A549 (cell line): ENCODE measurements at regions of chr15 and their contacts with region 1.

Region 1: GRCh38 chr15:68672781-68673205 is 94.0 kb downstream of the CORO2B start:
- DNase-seq: peak in 1 of 2 experiments; percentile 29
- ATAC-seq: peak; percentile 45 to 60; a peak in 3 of 6 replicates
- H3K4me3 ChIP-seq: no peak overlapping the region
- H3K27ac ChIP-seq: no peak overlapping the region
- H3K4me1 ChIP-seq: no peaks in the 10 kb centered on the region
- CTCF ChIP-seq: peak; percentile 28; the same call in 2 of the 3 replicates
- EP300 ChIP-seq: no peak
- POLR2A ChIP-seq: no peak
- RAD21 ChIP-seq: peak; percentile 27 to 53; a peak in 2 of 5 replicates

Region 2: DNA sequence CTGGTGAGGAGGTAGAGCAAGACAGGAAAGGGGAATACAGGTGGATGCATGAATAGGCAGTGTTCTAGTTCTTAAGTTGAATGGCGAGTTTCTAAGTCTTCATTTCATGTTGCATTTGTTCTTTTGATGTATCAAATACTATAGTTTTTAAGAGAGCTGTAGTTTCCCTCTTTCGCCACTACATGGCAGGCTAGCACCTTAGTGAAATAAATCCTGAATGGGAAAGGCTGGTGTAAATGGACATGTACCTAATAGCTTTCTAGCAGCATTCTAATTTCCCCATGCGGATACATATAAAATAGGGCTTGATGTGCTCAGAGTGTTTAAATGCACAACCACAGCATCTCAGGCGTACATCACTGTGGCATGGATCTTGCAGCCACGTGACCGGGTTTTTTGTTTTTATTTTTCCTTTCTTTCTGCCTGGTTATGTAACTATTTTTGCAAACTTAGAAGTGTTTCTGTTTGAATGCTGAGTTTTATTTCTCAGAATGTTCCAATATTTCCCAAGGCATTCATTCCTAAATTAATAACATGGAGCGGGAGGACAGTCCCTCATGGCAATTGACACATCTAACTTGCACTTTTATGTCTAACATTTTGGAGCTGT is 419.8 kb before region 1 on chr15:
- CTCF ChIA-PET with region 1: interaction called, 52 read pairs
- POLR2A ChIA-PET with region 1: no interaction called
- DNase-seq: peak; percentile 82 to 88
- ATAC-seq: peak; percentile 69 to 74
- H3K4me3 ChIP-seq: no peak overlapping the region
- H3K27ac ChIP-seq: no peak overlapping the region
- H3K4me1 ChIP-seq: peaks cover 12% of the 10 kb centered on the region; the same call in 2 of the 3 replicates
- CTCF ChIP-seq: peak; percentile 96
- EP300 ChIP-seq: no peak
- POLR2A ChIP-seq: no peak
- RAD21 ChIP-seq: peak; percentile 95 to 97

Region 3: DNA sequence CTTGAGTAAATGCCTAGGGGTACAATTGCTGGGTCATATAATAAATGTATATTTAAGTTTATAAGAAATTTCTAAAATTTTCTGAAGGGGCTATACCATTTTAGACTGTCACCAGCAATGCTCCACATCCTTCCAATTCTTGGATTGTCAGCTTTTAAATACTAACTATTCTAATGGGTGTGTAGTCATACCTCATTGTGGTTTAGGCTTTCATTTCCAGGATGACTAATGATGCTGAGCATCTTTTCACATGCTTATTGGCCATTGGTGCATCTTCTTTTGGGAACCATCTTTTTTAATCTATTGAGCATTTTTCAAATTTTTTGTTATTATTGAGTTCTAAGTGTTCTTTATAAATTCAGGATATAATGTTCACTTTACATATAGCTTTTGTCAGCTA is 146.5 kb before region 1 on chr15:
- CTCF ChIA-PET with region 1: interaction called, 13 read pairs
- POLR2A ChIA-PET with region 1: no interaction called
- DNase-seq: no peak
- ATAC-seq: no peak
- H3K4me3 ChIP-seq: no peak overlapping the region
- H3K27ac ChIP-seq: no peak overlapping the region
- H3K4me1 ChIP-seq: peaks cover 15% of the 10 kb centered on the region; the same call in 2 of the 3 replicates
- CTCF ChIP-seq: no peak
- EP300 ChIP-seq: no peak
- POLR2A ChIP-seq: no peak
- RAD21 ChIP-seq: no peak

Region 4: DNA sequence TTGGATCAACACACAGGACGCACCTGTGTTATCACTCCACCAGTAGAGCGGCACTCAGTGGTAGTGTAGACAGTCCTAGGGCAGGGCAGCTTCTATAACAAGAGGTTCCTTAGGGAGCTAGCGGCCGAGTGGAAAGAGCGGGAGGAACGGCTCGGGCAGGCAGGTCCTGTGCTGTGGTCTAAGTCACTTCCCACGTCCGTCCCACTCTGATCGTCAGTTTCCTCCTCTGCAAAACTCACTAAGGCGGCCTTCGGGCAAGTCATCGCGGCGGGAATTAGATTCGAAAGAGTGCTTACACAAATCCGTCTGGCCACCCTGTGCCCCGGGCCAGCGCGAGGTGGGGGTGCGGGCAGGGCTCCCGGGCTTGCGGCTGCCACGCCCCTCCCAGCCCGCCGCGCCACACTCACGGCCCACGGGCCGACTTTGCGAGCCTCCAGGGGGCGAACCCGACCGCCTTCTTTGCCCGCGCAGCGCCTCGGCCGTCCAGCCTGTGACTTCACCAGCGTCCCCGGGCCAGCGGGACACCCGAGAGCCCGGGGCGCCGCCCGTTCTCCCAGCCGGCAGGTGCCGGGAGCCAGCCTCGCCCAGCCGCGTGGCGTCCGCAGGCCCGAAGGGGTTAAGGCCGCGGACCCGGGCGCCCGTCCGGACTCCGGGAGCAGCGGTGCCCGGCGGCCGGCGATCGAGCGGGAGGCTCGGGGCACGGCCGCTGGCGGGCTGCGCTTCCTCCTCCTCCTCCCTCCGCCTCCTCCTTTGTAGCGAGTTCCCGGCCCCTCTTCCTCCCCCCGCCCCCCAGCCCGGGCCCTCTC is 94.4 kb before region 1 on chr15:
- CTCF ChIA-PET with region 1: interaction called, 244 read pairs
- POLR2A ChIA-PET with region 1: no interaction called
- DNase-seq: peak in 1 of 2 experiments; percentile 47
- ATAC-seq: peak; percentile 54 to 71
- H3K4me3 ChIP-seq: peak overlapping the region; percentile 63
- H3K27ac ChIP-seq: peak overlapping the region; percentile 67 to 81
- H3K4me1 ChIP-seq: 0 out of 3 replicates have a peak, but pooled peaks cover 4% of the 10 kb centered on the region
- CTCF ChIP-seq: peak; percentile 35; the same call in 2 of the 3 replicates
- EP300 ChIP-seq: no peak
- POLR2A ChIP-seq: no peak; the same call in 1 of the 2 replicates
- RAD21 ChIP-seq: peak in 1 of 2 experiments; percentile 43; a peak in 3 of 5 replicates

Region 5: DNA sequence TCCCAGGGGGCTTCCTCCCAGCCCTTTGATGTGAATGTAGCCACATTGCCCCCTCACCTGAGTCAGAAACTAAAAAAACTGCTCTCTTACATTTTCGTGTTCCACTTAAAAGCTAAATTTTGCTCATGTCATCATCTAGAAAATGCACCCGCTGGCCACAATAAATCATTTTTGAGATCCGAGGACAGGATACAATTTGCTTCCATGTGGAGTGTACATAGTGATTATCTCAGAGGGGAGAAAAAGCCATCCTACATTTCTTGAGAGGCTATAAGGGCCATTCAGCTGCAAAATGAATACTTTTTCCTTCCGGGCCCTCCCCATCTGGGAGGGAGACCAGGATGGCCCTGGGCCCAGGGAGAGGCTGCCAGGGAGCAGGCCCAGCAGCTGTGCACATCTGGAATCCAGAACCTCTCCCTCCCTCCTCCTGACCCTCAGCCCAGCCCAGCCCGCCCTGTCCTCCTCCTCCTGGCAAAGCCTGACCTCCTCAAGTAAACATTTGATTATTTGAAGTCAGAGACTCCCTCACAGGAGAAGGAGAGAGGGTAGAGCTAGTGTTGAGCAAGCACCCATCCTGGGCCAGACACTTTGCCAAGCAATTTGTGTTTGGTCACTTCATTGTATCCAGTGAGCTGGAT is 34.9 kb before region 1 on chr15:
- CTCF ChIA-PET with region 1: interaction called, 11 read pairs
- POLR2A ChIA-PET with region 1: no interaction called
- DNase-seq: no peak
- ATAC-seq: no peak
- H3K4me3 ChIP-seq: no peak overlapping the region
- H3K27ac ChIP-seq: no peak overlapping the region
- H3K4me1 ChIP-seq: peaks cover 11% of the 10 kb centered on the region; the same call in 1 of the 3 replicates
- CTCF ChIP-seq: no peak
- EP300 ChIP-seq: no peak
- POLR2A ChIP-seq: no peak
- RAD21 ChIP-seq: no peak

Region 6: GRCh38 chr15:68658151-68658550 is 14.6 kb before region 1 on chr15:
- CTCF ChIA-PET with region 1: interaction called, 205 read pairs
- POLR2A ChIA-PET with region 1: no interaction called
- DNase-seq: no peak
- ATAC-seq: no peak; a peak in 1 of 6 replicates
- H3K4me3 ChIP-seq: no peak overlapping the region
- H3K27ac ChIP-seq: no peak overlapping the region
- H3K4me1 ChIP-seq: no peaks in the 10 kb centered on the region
- CTCF ChIP-seq: no peak
- EP300 ChIP-seq: no peak
- POLR2A ChIP-seq: no peak
- RAD21 ChIP-seq: no peak

Region 7: DNA sequence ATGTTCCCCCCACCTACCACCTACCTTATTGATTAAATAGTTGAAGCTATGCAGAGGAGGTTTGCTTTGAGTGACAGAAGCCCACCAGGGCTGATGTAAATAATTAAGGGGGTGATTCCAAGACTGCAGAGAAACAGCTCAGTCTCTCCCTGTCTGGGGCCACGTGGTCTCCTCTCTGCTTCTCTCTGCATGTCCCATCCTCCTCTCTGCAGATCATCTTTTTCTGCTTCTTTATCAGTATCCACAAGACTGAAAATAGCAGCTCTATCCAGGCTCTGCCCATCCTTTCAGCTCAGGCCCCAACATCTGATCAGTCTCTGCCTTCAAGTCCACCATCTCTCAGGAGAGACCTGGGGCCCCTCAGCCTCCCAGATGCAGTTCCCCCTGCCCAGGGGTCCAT is 37.1 kb after region 1 on chr15:
- CTCF ChIA-PET with region 1: interaction called, 16 read pairs
- POLR2A ChIA-PET with region 1: no interaction called
- DNase-seq: no peak
- ATAC-seq: no peak
- H3K4me3 ChIP-seq: no peak overlapping the region
- H3K27ac ChIP-seq: no peak overlapping the region
- H3K4me1 ChIP-seq: no peaks in the 10 kb centered on the region
- CTCF ChIP-seq: no peak
- EP300 ChIP-seq: no peak
- POLR2A ChIP-seq: no peak
- RAD21 ChIP-seq: no peak

Region 8: DNA sequence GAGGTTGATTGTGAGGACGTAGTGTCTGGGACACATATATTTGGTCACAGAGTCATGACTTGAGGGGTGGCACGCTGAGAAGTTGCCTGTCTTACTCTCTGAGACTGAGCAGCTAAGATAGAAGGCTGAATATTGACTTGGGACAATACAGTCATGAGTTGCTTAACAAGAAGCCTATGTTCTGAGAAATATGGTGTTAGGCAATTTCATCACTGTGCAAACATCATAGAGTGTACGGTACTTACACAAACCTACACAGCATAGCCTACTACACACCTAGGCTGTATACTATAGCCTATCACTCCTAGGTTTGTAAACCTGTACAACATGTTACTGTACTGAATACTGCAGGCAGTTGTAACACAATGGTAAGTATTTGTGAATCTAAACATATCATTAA is 227.2 kb after region 1 on chr15:
- CTCF ChIA-PET with region 1: no interaction called
- POLR2A ChIA-PET with region 1: no interaction called
- DNase-seq: no peak
- ATAC-seq: peak in 1 of 2 experiments; percentile 31; a peak in 1 of 6 replicates
- H3K4me3 ChIP-seq: no peak overlapping the region
- H3K27ac ChIP-seq: no peak overlapping the region
- H3K4me1 ChIP-seq: no peaks in the 10 kb centered on the region
- CTCF ChIP-seq: no peak
- EP300 ChIP-seq: no peak
- POLR2A ChIP-seq: no peak
- RAD21 ChIP-seq: no peak

Region 9: GRCh38 chr15:69652751-69653305 is 980.0 kb after region 1 on chr15:
- CTCF ChIA-PET with region 1: no interaction called
- POLR2A ChIA-PET with region 1: no interaction called
- DNase-seq: no peak
- ATAC-seq: no peak
- H3K4me3 ChIP-seq: no peak overlapping the region
- H3K27ac ChIP-seq: no peak overlapping the region
- H3K4me1 ChIP-seq: no peaks in the 10 kb centered on the region
- CTCF ChIP-seq: no peak
- EP300 ChIP-seq: no peak
- POLR2A ChIP-seq: no peak
- RAD21 ChIP-seq: no peak; a peak in 1 of 5 replicates